ENCODE measurements at regions of chr20 and their contacts with region 1.

Region 1: DNA sequence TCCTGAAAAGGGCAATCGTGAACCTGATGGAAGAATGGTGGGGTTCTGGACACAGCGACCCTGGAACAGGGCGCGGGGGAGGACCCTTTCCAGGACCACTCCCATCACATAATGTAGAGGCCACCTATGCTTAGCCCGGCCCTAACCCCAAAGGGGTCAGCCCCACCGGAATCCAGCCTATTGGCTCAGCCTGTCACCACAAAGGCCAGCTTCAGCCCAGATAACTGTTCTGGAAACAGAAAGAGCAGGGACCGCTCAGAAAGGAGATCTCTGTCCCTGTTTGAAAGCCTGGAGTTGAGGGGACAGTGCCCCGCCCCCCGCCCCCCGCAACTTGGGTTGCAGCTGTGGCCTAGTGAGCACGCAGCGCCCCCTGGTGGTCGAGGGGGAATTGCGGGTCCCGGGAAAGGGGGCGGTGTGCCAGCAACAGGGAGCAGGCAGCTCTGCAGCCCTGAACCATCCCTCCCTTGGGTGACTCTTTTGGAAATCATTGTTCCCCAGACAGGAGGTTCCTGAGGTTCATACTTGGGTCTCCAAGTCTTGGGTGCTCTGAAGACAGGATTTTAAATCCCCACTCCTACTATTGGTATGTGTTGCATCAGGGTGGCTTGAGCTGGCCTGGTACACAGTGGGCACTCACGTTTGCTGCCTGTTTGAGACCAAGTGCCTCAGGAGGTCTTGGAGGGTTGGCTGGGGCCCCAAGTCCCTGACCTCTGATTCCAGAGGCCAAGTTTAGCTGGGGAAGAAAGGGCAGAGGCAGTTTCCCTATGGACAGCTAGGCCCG is 1.5 kb downstream of the SIGLEC1 start:
- DNase-seq: peak; percentile 83
- H3K4me3 ChIP-seq: peak overlapping the region; percentile 37
- H3K27ac ChIP-seq: peak overlapping the region; percentile 65
- H3K4me1 ChIP-seq: peaks cover 24% of the 10 kb centered on the region
- H3K27me3 ChIP-seq: no peaks in the 10 kb centered on the region
- CTCF ChIP-seq: peak; percentile 97

Region 2: GRCh38 chr20:3677733-3678132 is 33.2 kb before region 1 on chr20:
- intact Hi-C with region 1: loop called (anchors 2 kb)
- DNase-seq: peak; percentile 41
- H3K4me3 ChIP-seq: no peak overlapping the region
- H3K27ac ChIP-seq: peak overlapping the region; percentile 83
- H3K4me1 ChIP-seq: peaks cover 49% of the 10 kb centered on the region
- H3K27me3 ChIP-seq: peaks cover 66% of the 10 kb centered on the region
- CTCF ChIP-seq: no peak